Kidney (tissue), 22 donors: ENCODE measurements at regions of chr2 and their contacts with region 1.

Region 1: DNA sequence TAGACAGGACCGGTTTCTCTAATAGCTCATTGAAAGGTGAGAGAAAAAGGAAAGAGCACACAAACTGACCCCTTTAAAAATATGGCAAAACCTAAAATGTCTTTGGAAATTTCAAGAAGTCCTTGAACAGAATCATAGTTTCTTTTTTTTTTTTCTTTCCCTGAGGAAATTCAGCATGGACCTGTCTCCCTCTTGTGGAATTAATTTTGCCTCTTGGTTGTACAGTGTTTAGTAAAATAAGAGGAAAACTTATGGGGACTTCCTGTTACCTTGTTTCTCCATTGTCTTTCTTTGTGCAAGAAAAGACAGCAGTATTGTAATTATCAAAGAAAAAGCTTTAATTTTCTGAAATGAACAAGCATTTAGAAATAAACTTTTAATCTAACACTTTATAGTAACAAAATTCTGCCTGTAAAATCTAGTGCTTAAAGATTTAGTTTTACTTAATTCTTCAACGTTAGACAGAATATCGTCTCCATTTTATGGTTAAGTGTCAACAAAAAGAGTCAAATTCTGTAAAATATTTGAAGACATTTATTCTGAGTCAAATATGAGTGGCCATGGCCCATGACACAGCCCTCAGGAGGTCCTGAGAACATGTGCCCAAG is 176.3 kb upstream of the NABP1 start:
- DNase-seq: peak in 2 of 5 donors; percentile 62 to 80
- H3K4me3 ChIP-seq: no peak overlapping the region
- H3K27ac ChIP-seq: peak overlapping the region in 1 of 2 donors; percentile 32
- H3K4me1 ChIP-seq: peaks cover 0 to 10% (median 9%) of the 10 kb centered on the region in 3 donors
- H3K27me3 ChIP-seq: no peaks in the 10 kb centered on the region
- CTCF ChIP-seq: peak; percentile 69

Region 2: GRCh38 chr2:191165176-191165643 is 336.5 kb before region 1 on chr2:
- intact Hi-C with region 1: loop called (anchors 5 kb)
- DNase-seq: peak in 3 of 5 donors; percentile 32 to 77 (median 60)
- H3K4me3 ChIP-seq: no peak overlapping the region
- H3K27ac ChIP-seq: no peak overlapping the region
- H3K4me1 ChIP-seq: no peaks in the 10 kb centered on the region
- H3K27me3 ChIP-seq: no peaks in the 10 kb centered on the region
- CTCF ChIP-seq: peak; percentile 65

Region 3: GRCh38 chr2:191231995-191232394 is 269.7 kb before region 1 on chr2:
- intact Hi-C with region 1: loop called (anchors 10 kb)
- DNase-seq: peak in 2 of 5 donors; percentile 57 to 77
- H3K4me3 ChIP-seq: no peak overlapping the region
- H3K27ac ChIP-seq: peak overlapping the region in 1 of 2 donors; percentile 73
- H3K4me1 ChIP-seq: peaks cover 0 to 7% (median 6%) of the 10 kb centered on the region in 3 donors
- H3K27me3 ChIP-seq: no peaks in the 10 kb centered on the region
- CTCF ChIP-seq: peak; percentile 33